Dendritic cell treated with granulocyte-macrophage colony-stimulating factor and Interleukin-4, amounts not matched to agents 40 ng/mL and 50 ng/mL, for 4 days (primary cell): ENCODE measurements at regions of chr4 and their contacts with region 1.

Region 1: GRCh38 chr4:3292571-3293400 is at the start of gene RGS12:
- H3K4me3 Mint-ChIP-seq: peak within 1 kb of the TSS; percentile 79
- H3K27ac Mint-ChIP-seq: peak within 1 kb of the TSS; percentile 75
- H3K4me1 Mint-ChIP-seq: peaks cover 37% of the 10 kb centered on the region
- H3K27me3 Mint-ChIP-seq: peaks cover 56% of the 10 kb centered on the region

Region 2: GRCh38 chr4:3226467-3226866 is 66.3 kb before region 1 on chr4:
- intact Hi-C with region 1: loop called (anchors 1 kb)
- H3K4me3 Mint-ChIP-seq: no peak overlapping the region
- H3K27ac Mint-ChIP-seq: peak overlapping the region; percentile 89
- H3K4me1 Mint-ChIP-seq: peaks cover 58% of the 10 kb centered on the region
- H3K27me3 Mint-ChIP-seq: no peaks in the 10 kb centered on the region

Region 3: DNA sequence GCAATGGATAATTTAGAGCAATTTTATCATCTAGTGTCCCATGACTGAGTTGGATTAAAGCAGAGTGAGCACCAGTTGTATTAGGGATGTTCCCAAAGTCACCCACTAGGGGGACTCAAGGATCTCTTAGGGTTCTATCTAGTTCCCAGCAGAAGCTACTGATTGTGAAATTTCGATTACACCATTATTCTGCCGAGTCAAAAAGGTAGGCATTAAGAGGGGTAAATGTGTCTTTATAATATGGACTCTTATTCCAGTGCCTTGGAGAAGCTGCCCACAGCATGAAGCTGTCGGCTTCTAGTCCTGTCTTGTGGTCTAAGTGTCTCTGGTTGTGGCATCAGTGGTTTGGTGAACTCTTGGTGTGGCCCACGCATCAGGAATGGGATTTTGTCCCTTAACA is 53.4 kb after region 1 on chr4:
- intact Hi-C with region 1: no loop called
- H3K4me3 Mint-ChIP-seq: no peak overlapping the region
- H3K27ac Mint-ChIP-seq: no peak overlapping the region
- H3K4me1 Mint-ChIP-seq: peaks cover 22% of the 10 kb centered on the region
- H3K27me3 Mint-ChIP-seq: peaks cover 3% of the 10 kb centered on the region